CD14-positive monocyte (primary cell): ENCODE measurements at regions of chr11 and their contacts with region 1.

Region 1: GRCh38 chr11:76318744-76319384 is 62.1 kb downstream of the THAP12 start:
- DNase-seq: peak; percentile 70 to 81 (median 78)
- H3K4me3 ChIP-seq: no peak overlapping the region
- H3K4me3 Mint-ChIP-seq: no peak overlapping the region
- H3K27ac ChIP-seq: no peak overlapping the region
- H3K27ac Mint-ChIP-seq: no peak overlapping the region
- H3K4me1 ChIP-seq: peaks cover 11 to 18% of the 10 kb centered on the region in 2 donors
- H3K4me1 Mint-ChIP-seq: peaks cover 20% of the 10 kb centered on the region
- H3K27me3 ChIP-seq: peaks cover 17 to 35% of the 10 kb centered on the region in 2 donors
- H3K27me3 Mint-ChIP-seq: peaks cover 25 to 38% (median 33%) of the 10 kb centered on the region in 3 donors
- CTCF ChIP-seq: peak; percentile 98

Region 2: GRCh38 chr11:75706260-75706729 is 612.6 kb before region 1 on chr11:
- intact Hi-C with region 1: loop called in 1 of 2 experiments (anchors 10 kb)
- DNase-seq: peak; percentile 67 to 76 (median 69)
- H3K4me3 ChIP-seq: no peak overlapping the region
- H3K4me3 Mint-ChIP-seq: no peak overlapping the region
- H3K27ac ChIP-seq: no peak overlapping the region
- H3K27ac Mint-ChIP-seq: no peak overlapping the region
- H3K4me1 ChIP-seq: peaks cover 5 to 7% of the 10 kb centered on the region in 2 donors
- H3K4me1 Mint-ChIP-seq: peaks cover 8% of the 10 kb centered on the region
- H3K27me3 ChIP-seq: no peaks in the 10 kb centered on the region
- H3K27me3 Mint-ChIP-seq: peaks cover 3 to 8% (median 6%) of the 10 kb centered on the region in 3 donors
- CTCF ChIP-seq: peak; percentile 94

Region 3: GRCh38 chr11:75896843-75897419 is 421.9 kb before region 1 on chr11:
- intact Hi-C with region 1: loop called in 1 of 2 experiments (anchors 5 kb)
- DNase-seq: peak in 2 of 3 donors; percentile 18 to 51
- H3K4me3 ChIP-seq: no peak overlapping the region
- H3K4me3 Mint-ChIP-seq: no peak overlapping the region
- H3K27ac ChIP-seq: no peak overlapping the region
- H3K27ac Mint-ChIP-seq: no peak overlapping the region
- H3K4me1 ChIP-seq: peaks cover 27 to 43% of the 10 kb centered on the region in 2 donors
- H3K4me1 Mint-ChIP-seq: peaks cover 42% of the 10 kb centered on the region
- H3K27me3 ChIP-seq: no peaks in the 10 kb centered on the region
- H3K27me3 Mint-ChIP-seq: no peaks in the 10 kb centered on the region
- CTCF ChIP-seq: peak; percentile 82

Region 4: GRCh38 chr11:76626921-76627401 is 308.1 kb after region 1 on chr11:
- intact Hi-C with region 1: no loop called
- DNase-seq: peak; percentile 76 to 94 (median 81)
- H3K4me3 ChIP-seq: no peak overlapping the region
- H3K4me3 Mint-ChIP-seq: no peak overlapping the region
- H3K27ac ChIP-seq: peak overlapping the region; percentile 21 to 72
- H3K27ac Mint-ChIP-seq: peak overlapping the region; percentile 74 to 100 (median 97)
- H3K4me1 ChIP-seq: peaks cover 47 to 53% of the 10 kb centered on the region in 2 donors
- H3K4me1 Mint-ChIP-seq: peaks cover 57% of the 10 kb centered on the region
- H3K27me3 ChIP-seq: peaks cover 0 to 3% of the 10 kb centered on the region in 2 donors
- H3K27me3 Mint-ChIP-seq: peaks cover 19 to 37% (median 21%) of the 10 kb centered on the region in 3 donors
- CTCF ChIP-seq: no peak